Mammary epithelial cell (primary cell): ENCODE measurements at regions of chr7 and their contacts with region 1.

Region 1: GRCh38 chr7:47435889-47436312 is 146.0 kb downstream of the TNS3 start:
- DNase-seq: peak; percentile 56
- H3K4me3 ChIP-seq: no peak overlapping the region
- H3K27ac ChIP-seq: no peak overlapping the region
- H3K4me1 ChIP-seq: no peaks in the 10 kb centered on the region
- H3K27me3 ChIP-seq: no peaks in the 10 kb centered on the region
- CTCF ChIP-seq: peak; percentile 70 to 73

Region 2: GRCh38 chr7:47195641-47196040 is 240.3 kb before region 1 on chr7:
- CTCF ChIA-PET with region 1: no interaction called
- dilution Hi-C with region 1: no loop called
- in situ Hi-C with region 1: no loop called
- intact Hi-C with region 1: no loop called
- DNase-seq: no peak
- H3K4me3 ChIP-seq: no peak overlapping the region
- H3K27ac ChIP-seq: no peak overlapping the region
- H3K4me1 ChIP-seq: no peaks in the 10 kb centered on the region
- H3K27me3 ChIP-seq: no peaks in the 10 kb centered on the region
- CTCF ChIP-seq: peak; percentile 31 to 33

Region 3: GRCh38 chr7:47301105-47301477 is 134.8 kb before region 1 on chr7:
- CTCF ChIA-PET with region 1: interaction called, 4 read pairs
- dilution Hi-C with region 1: no loop called
- in situ Hi-C with region 1: no loop called
- intact Hi-C with region 1: loop called (anchors 1 kb)
- DNase-seq: no peak
- H3K4me3 ChIP-seq: no peak overlapping the region
- H3K27ac ChIP-seq: no peak overlapping the region
- H3K4me1 ChIP-seq: peaks cover 4% of the 10 kb centered on the region
- H3K27me3 ChIP-seq: no peaks in the 10 kb centered on the region
- CTCF ChIP-seq: peak; percentile 5 to 36

Region 4: DNA sequence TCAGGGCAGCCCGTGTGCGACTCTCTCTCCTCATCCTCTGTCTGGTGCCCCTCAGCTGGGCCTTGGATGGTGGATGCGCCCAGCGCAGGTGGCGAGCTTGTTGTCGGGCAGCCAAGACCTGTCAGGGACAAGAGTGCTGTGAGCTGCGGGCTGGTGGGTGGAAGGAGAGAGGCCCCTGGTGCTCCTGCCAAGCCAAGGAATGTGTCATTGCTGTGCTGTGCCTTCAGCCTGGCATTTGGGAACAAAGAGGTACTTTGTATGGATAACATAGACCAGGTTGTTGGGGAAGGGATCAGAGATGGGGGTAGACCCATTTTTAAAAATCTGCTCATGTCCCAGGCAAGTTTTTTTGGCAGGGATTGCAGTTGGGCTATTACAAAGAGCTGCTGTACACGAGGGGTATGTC is 391.5 kb after region 1 on chr7:
- CTCF ChIA-PET with region 1: no interaction called
- dilution Hi-C with region 1: no loop called
- in situ Hi-C with region 1: loop called in 1 of 2 experiments (anchors 10 kb)
- intact Hi-C with region 1: no loop called
- DNase-seq: peak; percentile 23
- H3K4me3 ChIP-seq: no peak overlapping the region
- H3K27ac ChIP-seq: no peak overlapping the region
- H3K4me1 ChIP-seq: peaks cover 15% of the 10 kb centered on the region
- H3K27me3 ChIP-seq: no peaks in the 10 kb centered on the region
- CTCF ChIP-seq: no peak